ENCODE measurements at regions of chrX and their contacts with region 1.

Region 1: DNA sequence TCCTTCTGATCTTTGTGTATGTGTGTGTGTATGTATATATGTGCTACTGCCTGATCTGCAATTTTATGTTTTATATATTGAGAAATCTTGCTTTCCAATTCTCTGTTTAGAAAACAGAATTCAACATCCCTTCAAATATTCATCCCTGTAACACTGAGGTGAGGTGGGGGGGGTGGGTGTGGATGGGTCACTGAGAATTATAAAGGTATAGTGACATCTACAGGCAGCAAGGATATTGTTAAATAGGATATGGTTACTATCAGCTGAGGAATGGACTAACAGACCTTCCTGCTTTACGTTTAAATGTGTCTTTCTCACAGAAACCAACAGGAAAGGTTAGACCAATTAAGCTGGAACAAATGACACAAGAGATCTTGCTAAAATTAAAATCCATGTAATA is 19.0 kb upstream of the MAGEB2 start:
- DNase-seq: no peak
- ATAC-seq: peak; percentile 80
- H3K4me3 Mint-ChIP-seq: no peak overlapping the region
- H3K27ac Mint-ChIP-seq: no peak overlapping the region
- H3K4me1 Mint-ChIP-seq: peaks cover 38% of the 10 kb centered on the region
- H3K27me3 Mint-ChIP-seq: no peaks in the 10 kb centered on the region
- CTCF ChIP-seq: no peak

Region 2: GRCh38 chrX:30141966-30142365 is 54.4 kb before region 1 on chrX:
- CTCF ChIA-PET with region 1: interaction called, 17 read pairs
- POLR2A ChIA-PET with region 1: no interaction called
- DNase-seq: peak; percentile 12
- ATAC-seq: peak; percentile 73
- H3K4me3 Mint-ChIP-seq: no peak overlapping the region
- H3K27ac Mint-ChIP-seq: no peak overlapping the region
- H3K4me1 Mint-ChIP-seq: peaks cover 3% of the 10 kb centered on the region; the same call in 1 of the 2 replicates
- H3K27me3 Mint-ChIP-seq: no peaks in the 10 kb centered on the region
- CTCF ChIP-seq: no peak